ENCODE measurements at regions of chrX and their contacts with region 1.

Region 1: DNA sequence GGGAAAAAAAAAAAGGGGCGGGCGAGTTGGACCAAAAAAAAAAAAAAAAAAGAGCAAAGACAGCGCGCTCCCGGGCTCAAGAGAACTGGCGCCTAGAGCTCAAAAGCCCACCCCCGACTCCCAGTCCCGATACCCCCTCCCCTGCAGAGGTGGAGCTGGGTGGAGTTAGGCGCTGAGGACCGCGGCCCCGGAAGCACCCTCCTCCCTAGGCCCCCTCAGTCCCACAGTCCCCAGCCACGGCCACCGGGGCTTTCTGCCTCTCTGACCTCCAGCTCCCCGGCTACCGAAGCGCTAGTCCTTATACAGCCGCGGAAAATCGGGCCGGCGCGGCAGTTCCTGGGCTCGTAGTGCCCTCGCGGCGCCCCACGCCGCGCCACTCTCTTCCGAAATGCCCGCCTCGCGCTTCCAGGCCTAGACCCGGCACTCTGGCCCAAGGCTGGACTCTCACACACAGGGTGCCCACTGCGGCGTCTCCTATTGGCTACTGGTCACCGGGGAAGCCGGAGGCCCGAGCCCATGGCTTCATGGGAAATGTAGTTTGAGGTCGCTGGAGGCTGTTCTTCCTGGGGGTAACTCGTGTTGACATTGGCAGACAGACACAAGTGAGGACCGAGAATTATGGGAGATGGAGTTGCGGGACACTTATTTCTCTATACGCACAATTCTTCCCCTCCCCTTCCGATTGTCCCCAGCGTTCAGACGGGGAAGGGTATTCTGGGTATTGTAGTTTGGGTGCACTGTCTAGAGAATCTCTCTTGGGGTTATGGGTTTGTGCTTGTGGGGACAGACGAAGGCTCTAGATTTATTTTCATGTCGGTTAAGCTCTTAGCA is at the start of gene ENOX2:
- DNase-seq: peak; percentile 87
- H3K4me3 Mint-ChIP-seq: no peak within 1 kb of the TSS
- H3K27ac Mint-ChIP-seq: no peak within 1 kb of the TSS
- H3K4me1 Mint-ChIP-seq: peaks cover 6% of the 10 kb centered on the region
- H3K27me3 Mint-ChIP-seq: no peaks in the 10 kb centered on the region
- total RNA-seq, gene ENOX2: 12.3 to 13.3 TPM

Region 2: DNA sequence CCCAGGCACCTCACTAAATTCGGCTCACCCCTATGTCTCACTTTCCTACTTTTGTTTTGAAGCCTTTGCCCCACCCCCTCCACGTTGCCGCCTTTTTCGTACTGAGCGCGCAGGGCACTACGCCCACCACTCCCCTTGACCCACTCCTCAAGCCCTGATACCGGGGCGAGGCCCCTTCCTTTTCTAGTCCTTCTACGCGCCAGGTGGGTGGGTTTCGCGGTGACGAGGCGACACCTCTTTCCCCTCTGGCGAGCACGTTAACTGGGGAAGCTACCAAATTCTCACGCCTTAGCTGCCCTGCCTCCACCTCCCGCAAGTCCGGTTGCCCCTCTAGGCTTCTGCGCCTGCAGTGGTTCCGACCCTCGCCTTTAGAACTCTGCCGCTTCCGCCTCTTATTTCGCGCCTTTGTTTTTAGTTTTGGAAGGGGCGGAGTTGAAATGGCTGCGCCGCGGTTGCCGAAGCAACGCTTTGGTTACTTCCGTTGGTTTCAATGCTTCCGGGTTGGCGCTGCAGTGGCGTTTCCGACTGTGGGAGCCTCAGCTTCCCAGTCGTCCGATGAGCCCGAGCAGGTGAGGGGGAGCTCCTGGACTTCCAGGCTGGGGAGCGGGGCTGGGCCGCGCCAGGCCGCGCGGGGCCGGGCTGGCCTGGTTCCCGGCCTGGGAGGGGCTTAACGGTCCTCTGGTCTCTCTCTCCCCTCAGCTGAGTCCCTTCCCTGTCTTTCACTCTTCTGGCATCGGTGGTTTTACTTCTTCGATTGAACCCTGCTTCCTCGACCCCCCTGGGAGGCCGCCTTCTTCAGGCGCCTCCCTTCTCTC is 563.4 kb before region 1 on chrX and contains the start of gene SLC25A14:
- CTCF ChIA-PET with region 1: no interaction called
- POLR2A ChIA-PET with region 1: no interaction called
- intact Hi-C with region 1: loop called (anchors 1 kb)
- DNase-seq: peak; percentile 82
- H3K4me3 Mint-ChIP-seq: peak within 1 kb of the TSS; percentile 87
- H3K27ac Mint-ChIP-seq: peak within 1 kb of the TSS; percentile 88
- H3K4me1 Mint-ChIP-seq: peaks cover 10% of the 10 kb centered on the region
- H3K27me3 Mint-ChIP-seq: no peaks in the 10 kb centered on the region
- total RNA-seq, gene SLC25A14: 12.1 to 13.2 TPM

Region 3: GRCh38 chrX:130401415-130402207 is 501.4 kb before region 1 on chrX and contains the start of gene RBMX2:
- CTCF ChIA-PET with region 1: no interaction called
- POLR2A ChIA-PET with region 1: no interaction called
- intact Hi-C with region 1: loop called (anchors 5 kb)
- DNase-seq: peak; percentile 76
- H3K4me3 Mint-ChIP-seq: peak within 1 kb of the TSS; percentile 83
- H3K27ac Mint-ChIP-seq: peak within 1 kb of the TSS; percentile 87
- H3K4me1 Mint-ChIP-seq: peaks cover 26% of the 10 kb centered on the region
- H3K27me3 Mint-ChIP-seq: peaks cover 6% of the 10 kb centered on the region
- total RNA-seq, gene RBMX2: 28.4 to 29.8 TPM

Region 4: DNA sequence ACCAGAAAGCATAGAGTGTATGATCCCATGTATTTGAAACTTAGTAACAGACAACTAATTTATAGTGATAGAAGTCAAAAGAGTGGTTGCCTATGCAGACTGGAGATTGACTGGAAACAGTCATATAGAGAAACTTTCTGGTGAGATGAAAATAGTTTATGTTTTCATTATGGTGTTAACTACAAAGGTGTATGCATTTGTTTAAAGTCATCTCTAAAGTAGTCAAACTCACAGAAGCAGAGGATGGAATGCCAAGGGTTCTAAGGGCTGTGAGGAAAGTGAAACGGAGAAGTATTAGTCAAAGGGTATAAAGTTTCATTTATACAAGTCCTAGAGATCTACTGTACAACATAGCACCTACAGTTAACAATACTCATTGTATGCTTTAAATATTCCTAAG is 45.8 kb before region 1 on chrX:
- CTCF ChIA-PET with region 1: no interaction called
- POLR2A ChIA-PET with region 1: no interaction called
- intact Hi-C with region 1: loop called (anchors 1 kb)
- DNase-seq: no peak
- H3K4me3 Mint-ChIP-seq: no peak overlapping the region
- H3K27ac Mint-ChIP-seq: no peak overlapping the region
- H3K4me1 Mint-ChIP-seq: peaks cover 8% of the 10 kb centered on the region
- H3K27me3 Mint-ChIP-seq: no peaks in the 10 kb centered on the region

Region 5: DNA sequence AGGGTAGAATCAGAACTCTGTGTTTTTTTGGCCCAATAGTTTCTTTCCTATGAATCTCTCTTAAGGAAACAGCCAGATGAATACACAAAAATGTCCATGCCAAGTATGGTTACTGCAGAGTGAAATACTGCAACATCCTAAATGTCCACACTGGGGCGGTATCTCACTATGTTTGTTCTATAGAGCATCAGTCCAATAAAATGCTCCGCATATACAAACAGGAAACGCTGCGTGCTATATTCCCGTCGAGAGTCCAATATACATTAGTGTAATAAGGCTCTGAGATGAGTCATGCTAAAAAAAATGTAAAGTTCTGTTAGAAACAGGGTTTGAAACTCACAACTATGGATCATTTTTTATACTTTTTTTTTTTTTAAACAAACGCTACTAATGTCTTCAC is 72.9 kb after region 1 on chrX:
- CTCF ChIA-PET with region 1: no interaction called
- POLR2A ChIA-PET with region 1: no interaction called
- intact Hi-C with region 1: no loop called
- DNase-seq: peak; percentile 27
- H3K4me3 Mint-ChIP-seq: no peak overlapping the region
- H3K27ac Mint-ChIP-seq: no peak overlapping the region
- H3K4me1 Mint-ChIP-seq: no peaks in the 10 kb centered on the region
- H3K27me3 Mint-ChIP-seq: no peaks in the 10 kb centered on the region